Ascending aorta (tissue), 2 donors: ENCODE measurements at regions of chr1 and their contacts with region 1.

Region 1: GRCh38 chr1:168567007-168567406 is 9.4 kb upstream of the XCL1 start:
- DNase-seq: no peak
- H3K4me3 ChIP-seq: no peak overlapping the region
- H3K27ac ChIP-seq: no peak overlapping the region
- H3K4me1 ChIP-seq: no peaks in the 10 kb centered on the region
- H3K27me3 ChIP-seq: no peaks in the 10 kb centered on the region
- CTCF ChIP-seq: no peak

Region 2: DNA sequence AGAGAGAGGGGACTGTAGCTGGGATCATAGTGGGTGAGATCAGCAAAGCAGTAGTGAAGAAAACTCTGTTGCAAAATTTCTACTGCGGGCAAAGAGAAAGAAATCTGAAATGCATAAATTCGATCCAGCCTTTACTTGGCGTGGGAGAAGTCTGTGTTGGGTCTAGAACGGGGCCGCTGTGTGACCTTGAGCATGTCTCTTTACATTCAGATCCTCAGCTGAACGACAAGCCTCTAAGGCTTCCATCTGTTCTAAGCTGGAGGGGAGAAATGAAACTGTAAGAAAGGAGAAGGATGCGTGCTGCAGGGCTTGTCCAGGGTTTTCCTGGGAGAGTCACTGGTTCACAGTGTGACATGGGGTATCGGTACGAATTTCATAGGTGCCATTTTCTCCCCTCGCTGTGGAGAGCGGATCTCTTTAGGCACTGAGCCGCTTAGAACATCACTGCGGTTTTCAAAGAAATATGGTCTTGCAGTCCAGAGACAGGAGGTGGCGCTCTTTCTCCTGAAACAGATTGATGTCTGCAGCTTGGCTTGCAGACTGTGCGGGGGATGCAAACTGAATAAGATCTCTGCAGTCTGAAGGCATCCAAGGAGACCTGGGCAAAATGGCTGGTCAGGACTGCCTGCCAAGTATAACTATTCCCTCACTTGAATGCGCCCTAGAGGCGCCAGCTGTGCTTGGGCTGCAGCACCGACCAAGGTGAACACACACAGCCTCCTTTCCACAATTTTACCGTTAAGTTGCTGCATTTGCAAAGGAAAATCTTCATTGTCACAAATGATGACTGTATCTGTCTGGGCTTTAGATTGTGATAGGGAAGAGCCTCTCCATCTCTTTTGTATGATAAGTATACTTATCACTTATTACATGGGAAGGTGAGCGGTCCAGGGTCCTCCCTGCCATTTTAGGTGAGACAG is 127.3 kb before region 1 on chr1:
- intact Hi-C with region 1: loop called (anchors 5 kb)
- DNase-seq: peak in 1 of 2 donors; percentile 84
- H3K4me3 ChIP-seq: peak overlapping the region in 1 of 2 donors; percentile 34
- H3K27ac ChIP-seq: no peak overlapping the region
- H3K4me1 ChIP-seq: no peaks in the 10 kb centered on the region
- H3K27me3 ChIP-seq: no peaks in the 10 kb centered on the region
- CTCF ChIP-seq: peak; percentile 51 to 72 (median 62)

Region 3: GRCh38 chr1:168863772-168864171 is 296.8 kb after region 1 on chr1:
- intact Hi-C with region 1: no loop called
- DNase-seq: no peak
- H3K4me3 ChIP-seq: no peak overlapping the region
- H3K27ac ChIP-seq: peak overlapping the region in 1 of 2 donors; percentile 64
- H3K4me1 ChIP-seq: no peaks in the 10 kb centered on the region
- H3K27me3 ChIP-seq: no peaks in the 10 kb centered on the region
- CTCF ChIP-seq: no peak